ENCODE measurements at regions of chr1 and their contacts with region 1.

Region 1: DNA sequence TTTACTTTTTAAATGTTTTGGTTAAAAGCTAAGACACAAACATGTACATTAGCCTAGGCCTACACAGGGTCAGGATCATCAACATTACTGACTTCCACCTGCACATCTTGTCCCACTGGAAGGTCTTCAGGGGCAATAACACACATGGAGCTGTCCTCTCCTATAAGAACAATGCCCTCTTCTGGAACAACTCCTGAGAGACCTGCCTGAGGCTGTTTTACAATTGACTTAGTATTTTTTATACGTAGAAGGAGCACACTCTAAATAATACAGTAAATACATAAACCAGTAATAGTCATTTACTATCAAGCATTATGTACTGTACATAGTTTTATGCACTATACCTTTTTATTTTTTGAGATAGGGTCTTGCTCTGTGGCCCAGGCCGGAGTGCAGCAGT is 14.1 kb upstream of the MOB3C start:
- DNase-seq: no peak
- H3K4me3 Mint-ChIP-seq: no peak overlapping the region
- H3K27ac Mint-ChIP-seq: no peak overlapping the region
- H3K4me1 Mint-ChIP-seq: no peaks in the 10 kb centered on the region
- H3K27me3 Mint-ChIP-seq: no peaks in the 10 kb centered on the region
- CTCF ChIP-seq: no peak

Region 2: DNA sequence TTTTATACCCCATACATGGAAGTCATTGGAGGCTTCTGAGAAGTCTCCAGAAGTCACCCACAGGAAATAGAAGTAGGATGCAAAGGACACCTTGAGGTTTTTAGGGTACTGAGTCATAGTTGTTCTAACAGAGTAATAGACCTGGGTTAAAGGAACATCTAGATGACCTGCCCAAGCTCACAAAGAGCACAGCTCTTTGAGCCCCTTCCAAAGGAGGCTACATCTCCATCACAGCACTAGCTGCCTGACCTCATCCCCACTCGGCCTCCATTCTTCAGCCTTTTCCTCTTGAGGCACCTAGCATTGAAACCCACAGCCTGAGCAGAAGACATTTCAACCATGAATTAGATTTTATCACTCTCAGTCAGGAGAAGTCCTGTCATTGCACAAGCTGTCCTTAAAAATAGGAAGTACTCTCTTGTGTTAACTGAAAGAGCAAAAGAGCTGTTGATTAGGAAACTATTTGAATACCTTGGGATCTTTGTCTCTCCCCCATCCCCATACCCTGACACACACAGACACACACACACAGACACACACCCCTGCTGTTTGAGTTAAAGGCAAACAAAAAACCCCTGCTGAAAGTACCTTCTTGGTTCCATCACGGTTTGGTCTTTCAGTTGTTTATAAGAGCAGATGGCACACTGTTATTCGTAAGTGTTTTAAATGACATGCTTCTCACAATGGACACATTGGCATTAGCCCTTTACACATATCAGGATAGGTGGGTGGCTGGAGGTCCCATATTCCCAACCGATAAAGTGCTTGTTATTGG is 48.9 kb before region 1 on chr1:
- CTCF ChIA-PET with region 1: no interaction called
- POLR2A ChIA-PET with region 1: no interaction called
- intact Hi-C with region 1: no loop called
- DNase-seq: no peak
- H3K4me3 Mint-ChIP-seq: no peak overlapping the region
- H3K27ac Mint-ChIP-seq: no peak overlapping the region
- H3K4me1 Mint-ChIP-seq: no peaks in the 10 kb centered on the region
- H3K27me3 Mint-ChIP-seq: no peaks in the 10 kb centered on the region
- CTCF ChIP-seq: no peak

Region 3: DNA sequence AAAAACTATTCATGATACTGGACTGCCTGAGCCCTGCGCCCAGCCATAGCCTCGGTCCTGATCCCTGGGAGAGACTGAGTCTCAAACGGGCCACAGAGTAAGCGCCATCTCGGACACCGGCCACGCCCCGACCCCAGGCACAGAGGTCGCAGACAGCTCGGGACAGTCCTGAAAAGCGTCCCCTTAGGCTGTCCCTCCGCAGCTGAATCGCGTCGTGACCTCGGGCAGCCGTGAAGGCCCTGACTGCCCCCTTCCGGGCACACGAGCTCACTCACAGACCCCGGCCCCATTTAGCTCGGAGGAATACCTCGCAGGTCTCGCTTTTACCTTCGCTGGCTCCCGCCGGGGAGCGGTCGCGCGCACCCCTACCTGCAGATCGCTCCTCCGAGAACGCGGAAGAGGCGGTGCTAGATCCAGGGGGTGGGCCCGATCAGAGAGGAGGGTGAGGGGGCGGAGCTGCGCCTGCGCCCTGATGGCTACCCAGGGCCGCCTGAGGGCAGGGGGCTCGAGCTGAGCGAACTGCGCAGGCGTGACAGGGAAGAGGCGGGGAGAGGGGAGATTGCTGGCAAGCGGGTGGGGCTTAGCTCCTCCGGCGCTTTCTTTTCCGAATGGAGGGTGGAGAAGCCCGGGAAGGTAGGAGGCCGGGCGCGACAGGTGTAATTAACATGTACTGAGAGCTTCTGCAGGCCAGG is 26.7 kb before region 1 on chr1 and contains the start of gene MKNK1:
- CTCF ChIA-PET with region 1: no interaction called
- POLR2A ChIA-PET with region 1: no interaction called
- intact Hi-C with region 1: no loop called
- DNase-seq: peak; percentile 97
- H3K4me3 Mint-ChIP-seq: peak within 1 kb of the TSS; percentile 91
- H3K27ac Mint-ChIP-seq: peak within 1 kb of the TSS; percentile 80
- H3K4me1 Mint-ChIP-seq: peaks cover 17% of the 10 kb centered on the region
- H3K27me3 Mint-ChIP-seq: no peaks in the 10 kb centered on the region
- CTCF ChIP-seq: peak; percentile 7
- total RNA-seq, gene MKNK1: 25.6 and 33.7 TPM in 2 replicates

Region 4: DNA sequence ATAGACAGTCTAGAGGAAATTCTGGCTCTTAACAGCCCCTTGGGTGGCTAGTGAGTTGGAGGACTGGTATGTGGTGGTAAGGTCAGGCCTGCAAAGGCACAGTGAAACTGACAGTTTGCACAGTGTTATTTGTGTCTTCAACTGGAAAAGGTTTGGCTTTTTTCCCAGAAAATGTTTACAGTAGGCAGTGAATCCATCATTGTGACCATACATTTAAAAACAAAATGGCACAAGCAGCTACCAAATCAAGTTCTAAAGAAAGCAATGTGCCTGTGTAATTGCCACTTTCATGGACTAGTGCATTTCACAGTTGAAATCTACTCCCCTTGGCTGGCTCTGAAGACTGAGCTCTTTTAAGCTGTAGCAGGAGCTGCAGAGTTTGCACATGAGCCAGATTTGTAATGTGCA is 12.7 kb after region 1 on chr1:
- CTCF ChIA-PET with region 1: no interaction called
- POLR2A ChIA-PET with region 1: interaction called, 10 read pairs
- intact Hi-C with region 1: no loop called
- DNase-seq: peak; percentile 78
- H3K4me3 Mint-ChIP-seq: no peak overlapping the region
- H3K27ac Mint-ChIP-seq: no peak overlapping the region
- H3K4me1 Mint-ChIP-seq: peaks cover 23% of the 10 kb centered on the region
- H3K27me3 Mint-ChIP-seq: no peaks in the 10 kb centered on the region
- CTCF ChIP-seq: no peak

Measured in MCF 10A (cell line).